ENCODE measurements at regions of chrX and their contacts with region 1.

Region 1: GRCh38 chrX:149962859-149963757 is 24.8 kb upstream of the EOLA2 start:
- DNase-seq: peak in 4 of 5 donors; percentile 2 to 21 (median 12)
- H3K4me3 ChIP-seq: no peak overlapping the region
- H3K4me3 Mint-ChIP-seq: no peak overlapping the region
- H3K27ac ChIP-seq: no peak overlapping the region
- H3K27ac Mint-ChIP-seq: peak overlapping the region in 2 of 7 donors; percentile 25 to 74
- H3K4me1 ChIP-seq: no peaks in the 10 kb centered on the region
- H3K4me1 Mint-ChIP-seq: no peaks in the 10 kb centered on the region
- H3K27me3 ChIP-seq: no peaks in the 10 kb centered on the region
- H3K27me3 Mint-ChIP-seq: no peaks in the 10 kb centered on the region

Region 2: GRCh38 chrX:149938427-149939270 is 24.5 kb before region 1 on chrX and contains the start of gene EOLA2:
- CTCF ChIA-PET with region 1: no interaction called
- POLR2A ChIA-PET with region 1: no interaction called
- intact Hi-C with region 1: loop called (anchors 2 kb)
- DNase-seq: peak; percentile 89 to 97 (median 95)
- H3K4me3 ChIP-seq: peak within 1 kb of the TSS; percentile 22 to 66
- H3K4me3 Mint-ChIP-seq: peak within 1 kb of the TSS; percentile 80 to 97 (median 93)
- H3K27ac ChIP-seq: peak within 1 kb of the TSS; percentile 90
- H3K27ac Mint-ChIP-seq: peak within 1 kb of the TSS; percentile 93 to 100 (median 99)
- H3K4me1 ChIP-seq: peaks cover 11% of the 10 kb centered on the region
- H3K4me1 Mint-ChIP-seq: peaks cover 3 to 16% (median 8%) of the 10 kb centered on the region in 4 donors
- H3K27me3 ChIP-seq: no peaks in the 10 kb centered on the region
- H3K27me3 Mint-ChIP-seq: no peaks in the 10 kb centered on the region
- total RNA-seq, gene EOLA2: 38.1 to 41.1 TPM

Measured in CD4-positive, alpha-beta memory T cell (primary cell).